Dorsolateral prefrontal cortex (tissue), 120 donors: ENCODE measurements at regions of chr9 and their contacts with region 1.

Region 1: DNA sequence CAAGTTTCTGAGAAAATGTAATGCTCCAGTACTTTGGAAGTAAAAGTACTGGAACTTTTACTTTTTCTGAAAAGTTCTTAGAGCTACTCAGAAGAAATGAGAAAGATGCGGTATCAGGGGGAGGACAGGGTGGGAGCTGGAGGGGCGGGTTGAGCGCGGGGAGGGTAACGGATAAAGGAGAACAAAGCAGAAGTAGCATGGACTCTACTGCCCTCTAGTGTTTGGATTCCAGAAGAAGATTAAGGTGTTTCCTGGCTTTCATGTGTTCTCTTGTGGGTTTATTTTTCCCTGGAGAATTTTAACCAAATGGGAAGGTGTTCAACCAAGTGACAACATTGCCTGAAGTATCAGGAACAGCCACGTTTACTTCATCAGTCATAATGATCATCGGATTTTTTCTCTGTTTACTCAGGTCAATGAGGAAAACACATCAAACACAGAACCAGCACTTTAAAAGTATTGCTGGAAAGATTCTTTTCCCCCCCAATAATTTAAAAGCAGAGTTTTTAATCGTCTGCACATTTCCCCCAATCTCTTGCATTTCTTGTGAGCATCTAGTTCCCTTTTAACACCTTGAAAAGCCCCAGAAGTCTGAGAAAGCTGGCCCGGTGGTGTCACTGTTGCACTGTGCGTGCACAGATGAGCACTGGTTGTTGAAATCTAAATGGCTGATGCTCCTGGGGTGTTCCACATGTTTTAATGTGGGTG is 190.6 kb downstream of the MPDZ start:
- DNase-seq: peak in 7 of 10 donors; percentile 6 to 47 (median 37)
- H3K4me3 ChIP-seq: peak overlapping the region in 5 of 59 donors; percentile 2 to 28 (median 23)
- H3K27ac ChIP-seq: peak overlapping the region in 1 of 59 donors; percentile 3
- H3K27me3 ChIP-seq: no peaks in the 10 kb centered on the region
- CTCF ChIP-seq: peak; percentile 67 to 92 (median 79)

Region 2: DNA sequence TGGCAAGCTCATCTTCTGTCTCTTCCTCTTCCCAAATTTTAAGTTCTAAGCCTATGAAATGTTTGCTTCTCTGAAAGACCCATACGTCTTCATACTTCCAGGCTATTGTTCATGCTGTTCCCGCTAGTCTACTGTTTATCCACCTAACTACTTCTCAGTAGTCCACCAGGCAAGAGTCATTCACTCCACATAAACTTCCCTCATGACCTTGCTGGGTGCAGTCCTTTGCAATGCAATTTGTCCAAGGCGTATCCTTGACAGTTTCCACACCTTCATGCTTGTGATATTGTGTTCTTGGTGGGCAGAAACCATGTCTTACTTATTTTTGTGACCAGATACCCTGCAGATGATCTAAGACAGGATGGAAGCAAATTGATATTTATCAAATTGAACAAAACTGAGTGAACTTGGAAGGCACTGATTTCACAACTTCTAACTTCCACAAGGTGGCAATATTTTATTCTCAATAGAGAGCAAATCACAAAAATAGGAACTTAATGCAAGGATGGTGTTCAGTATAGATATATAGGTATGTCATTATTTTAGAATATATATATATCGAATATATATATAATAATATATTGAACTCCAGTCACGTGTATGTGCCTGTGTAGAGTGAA is 365.4 kb before region 1 on chr9:
- intact Hi-C with region 1: loop called (anchors 5 kb)
- DNase-seq: no peak
- H3K4me3 ChIP-seq: no peak overlapping the region
- H3K27ac ChIP-seq: peak overlapping the region in 2 of 59 donors; percentile 43 to 46
- H3K27me3 ChIP-seq: no peaks in the 10 kb centered on the region
- CTCF ChIP-seq: peak; percentile 46 to 82 (median 68)

Region 3: DNA sequence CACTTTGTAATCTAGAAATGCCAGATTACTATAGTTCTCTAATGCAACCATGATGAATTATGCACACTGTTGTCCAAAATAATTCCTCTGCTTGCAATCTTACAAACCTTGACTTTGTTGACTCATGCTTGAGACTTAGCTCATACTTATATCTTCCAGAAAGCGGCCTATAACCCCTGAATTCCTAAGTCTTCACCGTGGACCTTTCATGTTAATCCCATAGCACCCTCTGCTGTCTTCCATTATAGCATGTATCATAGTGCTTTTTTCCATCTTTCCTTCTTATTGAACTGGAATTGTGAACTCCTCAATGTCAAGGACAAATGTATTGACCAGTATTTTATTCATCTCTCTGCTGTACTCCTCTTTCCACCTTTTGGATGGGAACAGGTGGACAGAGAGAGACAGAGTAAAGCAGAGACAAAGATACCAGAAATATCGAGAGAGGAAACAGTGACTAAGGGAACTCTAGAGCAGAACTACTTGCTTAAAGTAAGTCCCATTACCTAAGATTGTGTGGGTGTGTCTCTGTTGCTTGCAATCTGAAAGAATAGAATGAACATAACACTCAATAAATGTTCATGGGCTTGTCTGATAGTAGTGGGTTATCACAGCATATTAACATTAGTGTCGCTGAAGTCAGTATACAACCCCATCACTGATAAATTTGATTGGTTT is 204.0 kb before region 1 on chr9:
- intact Hi-C with region 1: loop called in 1 of 2 experiments (anchors 5 kb)
- DNase-seq: peak in 1 of 10 donors; percentile 16
- H3K4me3 ChIP-seq: no peak overlapping the region
- H3K27ac ChIP-seq: no peak overlapping the region
- H3K27me3 ChIP-seq: no peaks in the 10 kb centered on the region
- CTCF ChIP-seq: peak in 55 of 56 donors; percentile 39 to 84 (median 62)

Region 4: DNA sequence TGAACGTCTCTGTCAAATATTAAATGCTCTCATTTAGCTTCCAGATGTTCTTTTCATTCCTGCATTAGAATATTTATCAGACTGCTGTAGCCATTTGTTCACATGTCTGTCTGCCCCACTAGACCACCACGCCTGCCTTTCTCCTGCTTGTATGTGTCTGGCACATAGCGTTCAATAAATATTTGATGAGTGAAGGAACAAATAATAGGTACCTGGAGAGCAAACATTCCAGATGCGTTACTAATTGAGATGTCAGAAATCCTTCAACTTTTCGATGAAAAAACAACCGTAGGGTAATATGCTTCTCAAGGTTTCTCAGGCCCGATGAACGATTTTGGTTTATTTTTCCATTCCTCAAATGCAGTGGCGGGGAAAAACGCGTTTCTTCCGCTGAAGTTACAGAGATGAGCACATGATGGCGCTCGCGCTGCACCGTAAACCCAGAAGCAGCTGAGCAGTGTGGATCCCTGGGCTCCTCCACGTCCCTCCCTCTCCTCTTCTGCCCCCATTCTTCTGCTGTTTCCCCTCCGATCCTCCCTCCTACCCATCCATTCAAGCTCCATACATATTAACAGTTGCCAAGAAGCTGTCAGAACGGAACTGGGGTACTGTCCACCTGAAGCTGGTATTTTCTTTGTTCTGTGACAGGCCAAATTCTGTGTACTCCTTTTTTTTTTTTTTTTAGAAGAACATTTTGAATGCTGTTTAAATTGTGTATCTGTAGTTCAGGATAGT is 54.7 kb before region 1 on chr9:
- intact Hi-C with region 1: loop called (anchors 2 kb)
- DNase-seq: peak; percentile 61 to 80 (median 68)
- H3K4me3 ChIP-seq: peak overlapping the region in 53 of 59 donors; percentile 5 to 54 (median 36)
- H3K27ac ChIP-seq: peak overlapping the region in 3 of 59 donors; percentile 7 to 36 (median 30)
- H3K27me3 ChIP-seq: no peaks in the 10 kb centered on the region
- CTCF ChIP-seq: peak; percentile 45 to 89 (median 79)

Region 5: DNA sequence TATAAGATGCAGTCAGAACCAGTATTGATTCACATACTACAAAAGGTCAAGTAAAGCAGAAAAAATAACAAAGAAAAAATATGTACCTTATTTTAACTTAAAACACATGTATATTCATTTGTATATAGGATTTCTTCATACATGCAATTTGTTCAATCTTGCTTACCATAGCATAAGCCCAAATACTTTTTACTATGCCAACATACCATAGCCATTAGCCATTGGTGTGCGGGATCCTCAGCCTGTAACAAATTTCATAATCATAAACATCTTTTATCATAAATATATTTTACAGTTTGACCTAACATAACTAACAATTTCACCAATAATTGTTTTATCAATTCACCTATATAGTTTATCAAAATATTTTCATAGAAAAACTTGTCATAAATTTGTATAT is 139.6 kb after region 1 on chr9:
- intact Hi-C with region 1: no loop called
- DNase-seq: no peak
- H3K4me3 ChIP-seq: no peak overlapping the region
- H3K27ac ChIP-seq: no peak overlapping the region
- H3K27me3 ChIP-seq: no peaks in the 10 kb centered on the region
- CTCF ChIP-seq: no peak